ENCODE measurements at regions of chr10 and their contacts with region 1.

Region 1: GRCh38 chr10:74826142-74827044 is at the start of gene KAT6B:
- DNase-seq: peak; percentile 100
- H3K4me3 Mint-ChIP-seq: peak within 1 kb of the TSS; percentile 87
- H3K27ac Mint-ChIP-seq: peak within 1 kb of the TSS; percentile 94
- H3K4me1 Mint-ChIP-seq: peaks cover 46% of the 10 kb centered on the region
- H3K27me3 Mint-ChIP-seq: no peaks in the 10 kb centered on the region
- total RNA-seq, gene KAT6B: 21.2 and 21.7 TPM in 2 replicates

Region 2: DNA sequence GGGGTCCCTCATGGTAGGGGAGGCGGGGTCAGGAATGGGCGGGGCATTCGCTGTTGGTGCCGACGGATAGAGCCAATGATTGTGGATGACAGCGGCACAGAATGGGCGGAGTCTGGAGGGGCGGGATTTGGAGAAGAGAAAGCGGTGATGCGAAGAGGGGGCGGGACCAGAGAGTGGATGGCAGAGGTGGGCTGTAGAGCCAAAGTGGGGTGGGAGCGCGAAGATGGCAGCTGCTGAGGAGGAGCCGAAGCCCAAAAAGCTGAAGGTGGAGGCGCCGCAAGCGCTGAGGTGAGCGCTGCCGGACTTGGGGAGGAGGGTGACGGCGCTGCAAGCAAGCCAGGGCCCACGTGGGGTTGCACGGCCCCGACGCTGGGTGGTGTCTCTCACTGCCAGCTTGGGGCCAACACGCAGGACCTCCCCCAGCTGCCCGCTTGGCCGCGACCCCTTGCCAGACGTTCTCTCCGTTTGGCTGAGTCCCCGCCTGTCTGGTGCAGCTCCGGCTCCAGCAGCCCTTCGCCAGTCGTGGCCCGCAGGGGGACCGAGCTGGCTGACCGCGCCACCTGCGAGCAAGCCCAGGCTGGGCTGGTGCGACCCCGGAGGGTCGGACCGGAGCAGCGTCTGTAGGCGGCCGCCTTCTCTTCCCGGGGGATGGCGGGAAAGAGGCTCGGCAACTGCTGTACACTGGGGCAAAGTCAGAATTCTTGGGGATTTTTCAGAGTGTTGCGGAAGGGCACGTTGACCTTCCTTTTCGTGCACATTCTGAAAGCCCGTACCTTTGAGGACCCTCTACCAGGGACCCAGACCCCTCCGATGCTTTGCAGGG is 675.1 kb before region 1 on chr10 and contains the start of gene ADK:
- intact Hi-C with region 1: loop called (anchors 1 kb)
- DNase-seq: peak; percentile 100
- H3K4me3 Mint-ChIP-seq: no peak within 1 kb of the TSS
- H3K27ac Mint-ChIP-seq: no peak within 1 kb of the TSS
- H3K4me1 Mint-ChIP-seq: peaks cover 28% of the 10 kb centered on the region
- H3K27me3 Mint-ChIP-seq: no peaks in the 10 kb centered on the region
- total RNA-seq, gene ADK: 54.8 and 58.3 TPM in 2 replicates

Region 3: DNA sequence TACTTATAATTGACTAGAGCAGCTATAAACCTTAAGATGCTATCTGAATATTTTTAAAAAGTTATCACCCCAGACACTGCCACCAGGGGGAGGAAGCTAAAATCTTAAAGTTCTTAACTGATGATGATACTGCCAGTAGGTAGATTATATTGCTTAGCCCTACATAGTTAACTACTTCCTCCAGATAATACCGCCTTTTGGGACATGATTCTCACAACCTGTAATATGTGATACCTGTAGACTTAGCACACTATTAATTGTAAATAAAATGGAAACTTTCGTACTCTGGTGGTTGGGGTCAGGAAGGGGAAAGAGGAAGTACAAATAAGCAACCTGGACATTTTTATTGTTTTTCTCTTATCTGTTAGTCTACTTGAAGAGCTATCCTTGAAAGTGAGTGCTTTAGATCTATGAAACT is 406.4 kb before region 1 on chr10:
- intact Hi-C with region 1: loop called (anchors 5 kb)
- DNase-seq: peak; percentile 79
- H3K4me3 Mint-ChIP-seq: no peak overlapping the region
- H3K27ac Mint-ChIP-seq: no peak overlapping the region
- H3K4me1 Mint-ChIP-seq: peaks cover 6% of the 10 kb centered on the region
- H3K27me3 Mint-ChIP-seq: no peaks in the 10 kb centered on the region

Region 4: DNA sequence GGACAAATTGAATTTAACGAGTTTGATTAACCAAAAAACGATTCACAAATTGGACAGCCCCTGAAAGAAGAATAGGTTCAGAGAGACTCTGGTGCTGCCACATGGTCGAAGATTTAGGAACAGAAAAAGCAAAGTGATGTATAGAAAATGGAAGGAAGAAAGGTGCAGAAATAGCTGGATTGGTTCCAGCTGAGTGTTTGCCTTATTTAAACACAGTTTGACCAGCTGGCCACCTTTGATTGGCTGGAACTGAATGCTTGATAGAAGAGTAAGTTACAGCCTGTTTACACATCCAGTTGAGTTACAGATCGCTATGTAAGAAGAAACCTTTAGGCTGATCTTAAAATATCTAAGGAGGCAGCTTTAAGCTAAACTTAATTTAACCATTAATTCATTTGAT is 40.3 kb before region 1 on chr10:
- intact Hi-C with region 1: no loop called
- DNase-seq: no peak
- H3K4me3 Mint-ChIP-seq: no peak overlapping the region
- H3K27ac Mint-ChIP-seq: no peak overlapping the region
- H3K4me1 Mint-ChIP-seq: no peaks in the 10 kb centered on the region
- H3K27me3 Mint-ChIP-seq: no peaks in the 10 kb centered on the region

Region 5: DNA sequence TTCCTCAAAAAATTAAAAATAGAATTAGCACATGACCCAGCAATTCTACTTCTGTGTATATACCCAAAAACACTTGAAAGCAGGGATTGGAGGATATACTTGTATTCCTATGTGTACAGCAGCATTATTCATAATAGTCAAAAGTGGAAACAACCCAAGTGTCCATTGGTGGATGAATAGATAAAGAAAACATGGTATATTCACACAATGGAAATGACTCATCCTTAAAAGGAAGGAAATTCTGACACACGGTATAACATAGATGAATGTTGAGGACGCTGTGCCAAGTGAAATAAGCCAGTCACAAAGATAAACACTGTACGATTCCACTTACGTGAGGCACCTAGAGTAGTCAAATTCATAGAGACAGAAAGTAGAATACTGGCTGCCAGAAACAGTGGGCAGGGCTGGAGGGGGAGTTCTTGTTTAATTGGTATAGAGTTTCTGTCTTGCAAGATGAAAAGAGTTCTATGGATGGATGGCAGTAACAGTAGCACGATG is 26.6 kb before region 1 on chr10:
- intact Hi-C with region 1: loop called (anchors 1 kb)
- DNase-seq: peak; percentile 64
- H3K4me3 Mint-ChIP-seq: no peak overlapping the region
- H3K27ac Mint-ChIP-seq: peak overlapping the region; percentile 73
- H3K4me1 Mint-ChIP-seq: peaks cover 10% of the 10 kb centered on the region
- H3K27me3 Mint-ChIP-seq: no peaks in the 10 kb centered on the region

Region 6: DNA sequence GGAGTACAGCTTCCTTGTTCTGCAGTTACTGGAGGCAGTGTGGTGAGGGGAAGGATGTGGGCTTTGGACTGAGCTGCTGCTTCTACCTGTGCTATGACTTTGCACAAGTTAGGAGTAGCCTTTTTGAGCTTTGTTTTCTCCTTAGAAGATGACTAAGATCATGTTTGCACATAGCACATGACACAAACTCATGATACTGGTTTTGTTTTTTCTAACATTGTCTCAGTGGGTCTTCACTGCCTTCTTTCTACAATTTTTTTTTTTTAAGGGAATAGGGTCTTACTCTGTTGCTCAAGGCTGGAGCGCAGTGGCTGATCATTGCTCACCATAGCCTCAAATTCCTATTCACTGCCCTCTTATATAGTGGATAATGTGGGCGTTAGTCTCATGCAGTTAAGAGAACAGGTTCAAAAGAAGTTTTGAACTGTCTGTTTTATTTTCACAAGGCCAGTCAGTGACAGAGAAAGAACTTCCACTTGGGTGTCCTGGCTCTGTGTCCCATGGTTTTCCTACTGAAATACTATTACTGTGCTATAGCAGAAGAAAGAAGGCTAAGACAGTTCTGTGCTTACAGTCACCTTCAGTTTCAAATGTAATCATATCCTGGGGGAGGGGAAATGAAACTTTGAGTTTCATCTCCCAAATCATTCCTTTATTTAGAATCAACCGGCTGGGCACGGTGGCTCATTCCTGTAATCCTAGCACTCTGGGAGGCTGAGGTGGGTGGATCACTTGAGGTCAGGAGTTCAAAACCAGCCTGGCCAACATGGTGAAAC is 72.0 kb after region 1 on chr10:
- intact Hi-C with region 1: loop called (anchors 2 kb)
- DNase-seq: peak; percentile 79
- H3K4me3 Mint-ChIP-seq: peak overlapping the region; percentile 39
- H3K27ac Mint-ChIP-seq: peak overlapping the region; percentile 78
- H3K4me1 Mint-ChIP-seq: peaks cover 37% of the 10 kb centered on the region
- H3K27me3 Mint-ChIP-seq: no peaks in the 10 kb centered on the region

Region 7: GRCh38 chr10:75042292-75042974 is 216.0 kb after region 1 on chr10:
- intact Hi-C with region 1: loop called (anchors 1 kb)
- DNase-seq: peak; percentile 66
- H3K4me3 Mint-ChIP-seq: peak overlapping the region; percentile 32
- H3K27ac Mint-ChIP-seq: peak overlapping the region; percentile 86
- H3K4me1 Mint-ChIP-seq: peaks cover 33% of the 10 kb centered on the region
- H3K27me3 Mint-ChIP-seq: no peaks in the 10 kb centered on the region

Region 8: DNA sequence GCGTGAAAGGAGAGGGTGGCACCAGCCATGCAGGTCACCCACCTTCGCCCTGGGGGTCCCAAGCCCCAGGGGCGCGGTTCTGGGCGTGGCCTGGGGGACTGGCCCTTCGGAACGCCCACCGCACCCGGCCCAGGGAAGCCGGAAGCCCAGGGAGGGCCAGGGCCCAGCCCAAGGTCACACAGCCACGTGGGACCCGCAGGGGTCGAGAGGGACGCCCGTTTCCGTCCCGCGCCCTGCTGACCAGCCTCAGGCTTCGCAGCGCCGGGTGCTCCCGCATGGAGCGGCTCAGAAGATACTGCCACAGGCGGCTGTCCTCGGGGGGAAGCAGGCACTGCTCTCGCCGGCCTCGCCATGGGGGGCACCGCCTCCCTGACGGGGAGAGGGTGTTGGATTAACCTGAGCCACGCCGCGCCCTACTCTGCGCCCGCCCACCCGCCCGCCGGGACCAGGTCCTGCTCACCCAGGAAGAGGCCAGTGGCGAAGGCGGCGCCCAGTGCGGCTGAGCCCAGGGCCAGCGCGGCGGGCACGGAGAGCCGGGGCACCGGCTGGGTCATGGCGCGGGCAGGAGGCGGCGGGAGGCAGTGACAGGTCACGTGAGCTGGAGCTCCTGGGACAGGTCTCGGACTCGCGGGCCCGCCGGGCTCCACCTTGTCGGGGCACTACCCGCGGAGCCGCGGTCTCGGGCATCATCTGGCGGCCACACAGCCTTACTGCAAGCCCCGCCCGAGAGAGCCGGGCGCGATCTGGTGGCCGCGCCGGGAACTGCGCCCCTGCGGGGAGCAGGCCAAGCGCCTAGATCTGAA is 409.2 kb after region 1 on chr10 and contains the start of gene COMTD1:
- intact Hi-C with region 1: loop called (anchors 1 kb)
- DNase-seq: peak; percentile 98
- H3K4me3 Mint-ChIP-seq: peak within 1 kb of the TSS; percentile 87
- H3K27ac Mint-ChIP-seq: peak within 1 kb of the TSS; percentile 91
- H3K4me1 Mint-ChIP-seq: peaks cover 14% of the 10 kb centered on the region
- H3K27me3 Mint-ChIP-seq: no peaks in the 10 kb centered on the region
- total RNA-seq, gene COMTD1: 37.1 and 38.1 TPM in 2 replicates